ENCODE measurements at regions of chrX and their contacts with region 1.

Region 1: GRCh38 chrX:134484039-134484438 is 24.1 kb downstream of the HPRT1 start:
- DNase-seq: no peak
- ATAC-seq: 0 out of 3 replicates have a peak, but pooled peaks have one; percentile 38
- H3K4me3 ChIP-seq: no peak overlapping the region
- H3K27ac ChIP-seq: no peak overlapping the region
- H3K4me1 ChIP-seq: no peaks in the 10 kb centered on the region
- H3K27me3 ChIP-seq: no peaks in the 10 kb centered on the region; a peak in 1 of 4 replicates
- CTCF ChIP-seq: peak; percentile 48 to 59 (median 52); a peak in 5 of 6 replicates
- EP300 ChIP-seq: no peak
- POLR2A ChIP-seq: no peak
- RAD21 ChIP-seq: peak; percentile 50

Region 2: DNA sequence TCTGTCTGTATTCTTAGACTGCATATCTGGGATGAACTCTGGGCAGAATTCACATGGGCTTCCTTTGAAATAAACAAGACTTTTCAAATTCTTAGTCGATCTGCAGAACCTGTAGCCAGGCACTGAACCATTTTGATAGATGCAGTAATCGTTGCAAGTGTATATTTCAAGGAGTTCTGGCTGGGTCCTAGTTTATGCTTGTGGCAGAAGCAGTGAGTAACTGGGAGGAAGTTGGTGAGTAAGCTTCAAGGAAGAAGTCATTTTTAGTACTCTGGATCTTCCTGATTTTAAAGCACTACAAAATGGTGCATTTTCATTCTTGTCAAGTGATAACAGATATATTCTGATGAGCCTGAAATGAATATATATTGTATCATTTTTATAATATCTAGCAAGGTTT is 14.6 kb before region 1 on chrX:
- CTCF ChIA-PET with region 1: interaction called, 15 read pairs
- POLR2A ChIA-PET with region 1: no interaction called
- RAD21 ChIA-PET with region 1: interaction called, 3 read pairs
- SMC1A ChIA-PET with region 1: interaction called, 3 read pairs
- in situ Hi-C with region 1: no loop called
- intact Hi-C with region 1: no loop called
- DNase-seq: no peak
- ATAC-seq: no peak
- H3K4me3 ChIP-seq: no peak overlapping the region
- H3K27ac ChIP-seq: no peak overlapping the region
- H3K4me1 ChIP-seq: no peaks in the 10 kb centered on the region
- H3K27me3 ChIP-seq: no peaks in the 10 kb centered on the region
- CTCF ChIP-seq: no peak
- EP300 ChIP-seq: no peak
- POLR2A ChIP-seq: no peak
- RAD21 ChIP-seq: no peak

Region 3: DNA sequence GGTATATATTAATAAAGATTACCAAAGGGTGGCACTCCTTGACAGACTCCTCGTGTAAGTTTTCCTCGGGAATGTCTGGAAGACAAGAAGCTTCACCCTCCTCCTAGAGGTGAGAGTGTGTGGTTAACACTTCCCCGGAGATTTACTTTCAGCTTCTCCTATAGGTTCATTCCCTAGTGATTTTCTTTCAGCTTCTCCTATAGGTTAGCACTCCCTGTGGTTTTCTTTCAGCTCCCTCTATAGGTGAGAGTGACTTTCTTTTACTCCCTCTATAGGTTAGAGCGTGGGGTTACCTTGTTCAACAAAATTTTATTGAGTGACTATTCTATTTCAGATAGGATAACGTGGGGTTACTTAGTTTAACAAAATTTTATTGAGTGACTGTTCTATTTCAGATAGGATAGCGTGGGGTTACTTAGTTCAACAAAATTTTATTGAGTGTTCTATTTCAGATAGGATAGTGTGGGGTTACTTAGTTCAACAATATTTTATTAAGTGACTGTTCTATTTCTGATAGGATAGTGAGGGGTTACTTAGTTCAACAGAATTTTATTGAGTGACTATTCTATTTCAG is 280.3 kb after region 1 on chrX:
- CTCF ChIA-PET with region 1: no interaction called
- POLR2A ChIA-PET with region 1: no interaction called
- RAD21 ChIA-PET with region 1: no interaction called
- SMC1A ChIA-PET with region 1: interaction called, 5 read pairs
- in situ Hi-C with region 1: no loop called
- intact Hi-C with region 1: loop called (anchors 5 kb)
- DNase-seq: no peak
- ATAC-seq: peak; percentile 92
- H3K4me3 ChIP-seq: no peak overlapping the region
- H3K27ac ChIP-seq: no peak overlapping the region
- H3K4me1 ChIP-seq: no peaks in the 10 kb centered on the region
- H3K27me3 ChIP-seq: no peaks in the 10 kb centered on the region
- CTCF ChIP-seq: peak in 2 of 3 experiments; percentile 25 to 27; a peak in 2 of 6 replicates
- EP300 ChIP-seq: no peak
- POLR2A ChIP-seq: no peak
- RAD21 ChIP-seq: no peak

Region 4: GRCh38 chrX:134782796-134783195 is 298.8 kb after region 1 on chrX:
- CTCF ChIA-PET with region 1: interaction called, 10 read pairs
- POLR2A ChIA-PET with region 1: no interaction called
- RAD21 ChIA-PET with region 1: no interaction called
- SMC1A ChIA-PET with region 1: interaction called, 3 read pairs
- in situ Hi-C with region 1: loop called (anchors 5 kb)
- intact Hi-C with region 1: no loop called
- DNase-seq: no peak
- ATAC-seq: no peak
- H3K4me3 ChIP-seq: no peak overlapping the region
- H3K27ac ChIP-seq: no peak overlapping the region
- H3K4me1 ChIP-seq: no peaks in the 10 kb centered on the region
- H3K27me3 ChIP-seq: no peaks in the 10 kb centered on the region
- CTCF ChIP-seq: peak; percentile 34 to 50 (median 41)
- EP300 ChIP-seq: no peak
- POLR2A ChIP-seq: no peak
- RAD21 ChIP-seq: peak; percentile 35

Region 5: GRCh38 chrX:134990801-134991481 is 506.9 kb after region 1 on chrX and contains the start of gene SMIM10:
- CTCF ChIA-PET with region 1: no interaction called
- POLR2A ChIA-PET with region 1: no interaction called
- RAD21 ChIA-PET with region 1: no interaction called
- SMC1A ChIA-PET with region 1: no interaction called
- in situ Hi-C with region 1: no loop called
- intact Hi-C with region 1: loop called (anchors 10 kb)
- DNase-seq: no peak
- ATAC-seq: peak; percentile 38; the same call in 2 of the 3 replicates
- H3K4me3 ChIP-seq: no peak within 1 kb of the TSS
- H3K27ac ChIP-seq: no peak within 1 kb of the TSS
- H3K4me1 ChIP-seq: no peaks in the 10 kb centered on the region
- H3K27me3 ChIP-seq: peaks cover 0 to 3% of the 10 kb centered on the region in 2 experiments; a peak in 1 of 4 replicates
- CTCF ChIP-seq: no peak
- EP300 ChIP-seq: no peak
- POLR2A ChIP-seq: no peak
- RAD21 ChIP-seq: no peak
- polyA plus RNA-seq, gene SMIM10: 0.04 TPM in 1 of 2 experiments, not detected in the other

Region 6: DNA sequence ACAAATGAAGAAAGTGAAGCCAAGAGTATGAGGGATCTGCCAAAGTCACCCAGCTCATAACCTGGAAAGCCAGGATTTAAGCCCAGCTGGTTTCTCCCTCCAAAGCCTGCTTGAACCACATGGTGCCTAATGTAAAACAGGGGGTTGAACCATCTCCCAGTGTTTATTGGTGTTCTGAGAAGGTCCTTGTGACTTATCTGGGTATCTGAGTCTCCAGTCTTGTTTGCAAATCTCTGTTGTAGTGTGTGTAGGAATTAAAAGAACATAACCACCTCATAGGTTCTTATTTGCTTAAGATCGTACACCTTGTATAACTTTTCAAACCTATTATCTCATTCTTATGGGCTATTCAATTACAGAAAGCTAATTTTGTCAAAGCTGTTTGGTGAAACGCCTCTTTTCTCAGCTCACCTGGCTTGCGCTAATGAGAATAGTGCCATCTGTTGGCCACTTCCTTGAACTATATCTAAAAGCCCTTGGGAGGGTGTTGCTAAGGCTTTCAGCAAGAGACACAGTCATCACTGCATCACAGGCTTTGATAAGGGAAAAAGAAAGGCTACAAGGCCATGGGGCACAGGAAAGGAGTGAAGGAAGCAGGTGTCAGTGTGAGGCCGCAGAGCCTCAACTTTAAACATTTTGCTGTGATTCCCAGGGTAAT is 602.3 kb after region 1 on chrX:
- CTCF ChIA-PET with region 1: interaction called, 5 read pairs
- POLR2A ChIA-PET with region 1: no interaction called
- RAD21 ChIA-PET with region 1: no interaction called
- SMC1A ChIA-PET with region 1: no interaction called
- in situ Hi-C with region 1: no loop called
- intact Hi-C with region 1: loop called (anchors 10 kb)
- DNase-seq: peak; percentile 15
- ATAC-seq: peak; percentile 96
- H3K4me3 ChIP-seq: no peak overlapping the region
- H3K27ac ChIP-seq: no peak overlapping the region
- H3K4me1 ChIP-seq: no peaks in the 10 kb centered on the region
- H3K27me3 ChIP-seq: no peaks in the 10 kb centered on the region
- CTCF ChIP-seq: peak; percentile 63 to 73 (median 69); a peak in 5 of 6 replicates
- EP300 ChIP-seq: no peak
- POLR2A ChIP-seq: no peak
- RAD21 ChIP-seq: peak; percentile 60

Measured in GM12878 (cell line).